ENCODE measurements at regions of chr14 and their contacts with region 1.

Region 1: GRCh38 chr14:88667555-88668273 is 104.9 kb downstream of the ZC3H14 start:
- DNase-seq: peak; percentile 43
- H3K4me3 Mint-ChIP-seq: no peak overlapping the region
- H3K27ac Mint-ChIP-seq: no peak overlapping the region
- H3K4me1 Mint-ChIP-seq: no peaks in the 10 kb centered on the region
- H3K27me3 Mint-ChIP-seq: no peaks in the 10 kb centered on the region

Region 2: GRCh38 chr14:88682495-88683114 is 14.9 kb after region 1 on chr14:
- CTCF ChIA-PET with region 1: interaction called, 11 read pairs
- POLR2A ChIA-PET with region 1: no interaction called
- DNase-seq: peak; percentile 32
- H3K4me3 Mint-ChIP-seq: no peak overlapping the region
- H3K27ac Mint-ChIP-seq: no peak overlapping the region
- H3K4me1 Mint-ChIP-seq: peaks cover 8% of the 10 kb centered on the region
- H3K27me3 Mint-ChIP-seq: no peaks in the 10 kb centered on the region

Region 3: DNA sequence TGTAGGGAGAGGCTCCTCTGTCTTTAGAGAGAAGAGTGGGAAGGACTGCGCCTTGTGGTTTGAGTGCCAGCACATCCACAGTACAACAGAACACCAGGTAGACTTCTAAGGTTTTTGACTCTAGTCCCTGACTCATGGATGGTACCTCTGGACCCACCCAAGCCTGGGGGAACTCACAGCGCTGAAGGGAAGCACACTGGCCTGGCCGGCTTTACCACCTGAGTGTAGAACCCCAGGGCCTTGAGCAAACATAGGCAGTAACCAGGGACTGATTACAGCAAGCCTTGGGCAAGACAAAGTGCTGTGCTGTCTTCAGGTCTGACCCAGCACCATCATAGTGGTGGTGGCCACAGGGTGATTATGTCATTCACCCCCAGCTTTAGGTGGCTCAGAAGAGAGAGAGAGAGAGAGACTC is 107.8 kb after region 1 on chr14:
- CTCF ChIA-PET with region 1: no interaction called
- POLR2A ChIA-PET with region 1: no interaction called
- DNase-seq: no peak
- H3K4me3 Mint-ChIP-seq: no peak overlapping the region
- H3K27ac Mint-ChIP-seq: no peak overlapping the region
- H3K4me1 Mint-ChIP-seq: no peaks in the 10 kb centered on the region
- H3K27me3 Mint-ChIP-seq: no peaks in the 10 kb centered on the region

Region 4: DNA sequence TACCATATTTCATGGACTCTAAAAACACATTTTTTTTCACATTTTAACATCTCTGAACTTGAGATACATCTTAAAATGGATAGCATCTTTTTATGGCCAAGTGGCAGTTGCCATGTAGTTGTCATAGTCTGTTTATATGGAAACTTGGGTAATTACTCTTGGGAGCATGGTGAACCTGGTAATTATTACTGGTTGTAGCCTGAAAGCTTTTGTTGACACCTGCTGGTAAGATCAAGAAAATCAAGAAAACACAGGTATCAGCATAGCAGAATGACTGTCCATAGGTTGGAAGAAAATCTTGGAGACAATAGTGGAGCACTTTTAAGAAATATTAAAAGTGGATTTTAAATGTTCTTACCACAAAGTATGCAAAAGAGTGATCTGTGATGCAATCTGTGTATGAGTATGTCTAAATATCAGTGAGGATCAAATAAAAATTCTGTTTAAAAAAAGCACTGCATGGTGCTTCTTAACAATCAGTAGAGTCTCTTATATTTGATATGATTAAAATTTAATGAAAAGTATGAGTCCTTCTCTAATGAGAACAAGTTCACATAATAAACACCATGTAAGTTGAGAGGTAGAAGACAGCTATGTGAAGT is 200.9 kb after region 1 on chr14:
- CTCF ChIA-PET with region 1: interaction called, 22 read pairs
- POLR2A ChIA-PET with region 1: no interaction called
- DNase-seq: no peak
- H3K4me3 Mint-ChIP-seq: no peak overlapping the region
- H3K27ac Mint-ChIP-seq: no peak overlapping the region
- H3K4me1 Mint-ChIP-seq: no peaks in the 10 kb centered on the region
- H3K27me3 Mint-ChIP-seq: no peaks in the 10 kb centered on the region

Measured in activated CD4-positive, alpha-beta memory T cell treated with anti-CD3 and anti-CD28 coated beads, Interleukin-2, amount 10 ng/mL, durations not matched to agents 7 days and 5 days (primary cell).